Heart right ventricle (tissue), 16 donors: ENCODE measurements at regions of chr17 and their contacts with region 1.

Region 1: DNA sequence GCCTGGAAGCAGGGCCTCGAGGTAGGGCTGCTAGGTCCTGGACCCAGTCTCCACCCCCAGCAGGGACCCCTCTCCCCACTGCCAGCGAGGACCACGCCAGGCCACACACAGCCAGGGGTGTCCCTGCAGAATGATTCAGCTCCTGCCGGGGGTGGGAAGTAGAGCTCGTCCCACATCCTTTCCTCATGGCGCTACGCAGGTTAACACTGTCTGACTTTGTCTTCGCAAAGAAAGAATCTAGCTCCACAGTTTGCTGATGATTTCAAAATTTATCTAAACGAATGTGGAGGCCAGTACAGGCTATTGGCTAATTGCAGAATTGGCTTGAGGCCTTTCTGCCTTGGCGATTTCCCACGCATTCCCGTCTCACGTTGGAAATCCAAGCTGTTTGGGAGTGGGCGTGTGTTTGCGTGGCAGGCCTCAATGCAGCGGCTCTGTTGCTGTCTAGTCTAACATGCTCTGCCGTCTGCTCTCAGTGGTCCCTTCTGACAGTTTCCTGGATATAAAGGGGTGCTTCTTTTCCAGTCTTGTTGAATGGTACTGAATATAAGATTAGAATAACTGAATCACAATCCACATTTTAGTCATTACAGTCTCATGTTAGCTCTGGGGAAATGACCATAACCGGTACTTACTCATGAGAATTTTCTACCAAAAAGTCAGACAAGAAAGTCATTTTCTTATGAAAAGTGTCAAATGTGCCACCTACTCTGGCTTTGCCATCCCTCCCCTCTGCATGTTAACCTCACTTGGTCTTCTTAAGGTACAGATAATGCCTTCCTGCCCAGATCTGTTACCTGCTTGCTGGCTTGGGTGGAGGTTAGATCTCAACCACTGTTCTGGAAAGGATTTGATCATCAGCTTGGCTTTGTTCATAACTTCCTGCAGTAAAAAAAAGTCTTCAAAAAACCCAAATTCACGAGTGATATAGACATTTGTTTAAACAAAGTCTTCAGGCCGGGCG is 252.4 kb downstream of the NTN1 start:
- DNase-seq: peak in 1 of 2 donors; percentile 23
- ATAC-seq: peak; percentile 44 to 76 (median 61)
- H3K4me3 ChIP-seq: no peak overlapping the region
- H3K27ac ChIP-seq: peak overlapping the region in 3 of 10 donors; percentile 5 to 46 (median 30)
- H3K4me1 ChIP-seq: peaks cover 0 to 4% (median 0%) of the 10 kb centered on the region in 9 donors
- H3K27me3 ChIP-seq: no peaks in the 10 kb centered on the region
- CTCF ChIP-seq: no peak

Region 2: DNA sequence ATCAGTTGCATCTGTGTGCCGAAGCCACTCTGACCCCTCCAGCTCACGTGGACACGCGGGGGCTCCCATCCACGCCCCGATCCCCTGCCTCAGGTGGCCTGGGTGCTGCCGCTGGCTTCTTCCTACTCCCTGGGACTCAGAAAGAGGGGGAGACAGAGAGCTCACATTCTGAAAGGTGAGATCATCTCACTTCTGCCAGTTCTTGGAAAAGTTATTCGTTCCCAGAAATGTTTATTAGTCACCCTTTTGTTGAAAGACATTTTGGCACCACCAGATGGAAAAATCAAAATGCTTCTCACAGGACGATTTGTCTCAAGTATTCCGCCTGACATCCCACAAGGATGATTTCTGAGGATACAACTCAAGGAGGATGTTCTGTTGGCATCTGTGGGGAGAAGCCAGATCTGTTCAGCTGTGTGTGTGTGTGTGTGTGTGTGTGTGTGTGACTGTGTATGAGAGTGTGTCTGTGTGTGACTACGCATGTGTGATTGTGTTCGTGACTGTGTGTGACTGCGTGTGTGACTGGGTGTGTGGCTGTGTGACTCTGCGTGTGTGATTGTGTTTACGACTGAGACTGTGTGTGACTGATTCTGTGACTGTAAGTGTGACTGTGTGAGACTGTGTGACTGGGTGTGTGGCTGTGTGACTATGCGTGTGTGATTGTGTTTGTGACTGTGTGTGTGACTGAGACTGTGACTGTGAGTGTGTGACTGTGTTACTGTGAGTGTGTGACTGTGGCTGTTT is 45.1 kb before region 1 on chr17:
- intact Hi-C with region 1: loop called in 1 of 10 experiments (anchors 10 kb)
- DNase-seq: no peak
- ATAC-seq: peak in 4 of 8 donors; percentile 19 to 51 (median 36)
- H3K4me3 ChIP-seq: no peak overlapping the region
- H3K27ac ChIP-seq: peak overlapping the region in 2 of 10 donors; percentile 16 to 38
- H3K4me1 ChIP-seq: peaks cover 0 to 7% (median 3%) of the 10 kb centered on the region in 9 donors
- H3K27me3 ChIP-seq: peaks cover 0 to 18% (median 0%) of the 10 kb centered on the region in 7 donors
- CTCF ChIP-seq: no peak